HepG2 (cell line): ENCODE measurements at regions of chr6 and their contacts with region 1.

Region 1: GRCh38 chr6:44667668-44668390 is 280.3 kb downstream of the CDC5L start:
- DNase-seq: peak; percentile 39
- ATAC-seq: peak; percentile 86
- H3K4me3 ChIP-seq: no peak overlapping the region
- H3K27ac ChIP-seq: no peak overlapping the region
- H3K4me1 ChIP-seq: peaks cover 10% of the 10 kb centered on the region; the same call in 1 of the 2 replicates
- H3K27me3 ChIP-seq: peaks cover 2 to 22% of the 10 kb centered on the region in 2 experiments; a peak in 3 of 5 replicates
- CTCF ChIP-seq: peak; percentile 72
- EP300 ChIP-seq: no peak
- POLR2A ChIP-seq: no peak
- RAD21 ChIP-seq: 0 out of 2 replicates have a peak, but pooled peaks have one; percentile 17

Region 2: DNA sequence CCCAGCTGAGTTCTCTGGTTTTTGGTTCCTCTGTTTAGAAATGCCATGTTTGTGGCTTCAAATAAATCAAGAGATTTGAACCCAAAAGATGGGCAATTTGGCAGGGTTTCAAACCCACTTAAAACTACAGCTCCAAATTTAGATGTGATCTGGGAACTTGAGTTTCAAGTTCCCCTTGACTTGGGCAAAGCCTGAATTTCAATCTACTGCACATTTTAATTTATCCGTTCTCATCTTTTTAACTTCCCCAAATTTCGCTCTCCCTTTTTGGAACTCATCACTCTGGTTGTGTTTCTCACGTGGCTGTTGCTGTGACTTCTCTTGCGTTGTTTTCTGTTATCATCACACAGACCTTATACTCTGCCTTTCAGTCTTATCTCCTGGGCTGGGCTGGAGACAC is 49.5 kb before region 1 on chr6:
- CTCF ChIA-PET with region 1: no interaction called
- POLR2A ChIA-PET with region 1: no interaction called
- in situ Hi-C with region 1: no loop called
- intact Hi-C with region 1: no loop called
- DNase-seq: no peak
- ATAC-seq: no peak
- H3K4me3 ChIP-seq: no peak overlapping the region
- H3K27ac ChIP-seq: no peak overlapping the region
- H3K4me1 ChIP-seq: no peaks in the 10 kb centered on the region
- H3K27me3 ChIP-seq: peaks cover 0 to 24% of the 10 kb centered on the region in 2 experiments; a peak in 4 of 5 replicates
- CTCF ChIP-seq: no peak
- EP300 ChIP-seq: no peak
- POLR2A ChIP-seq: no peak
- RAD21 ChIP-seq: no peak

Region 3: GRCh38 chr6:45421709-45422502 is 754.1 kb after region 1 on chr6:
- CTCF ChIA-PET with region 1: no interaction called
- POLR2A ChIA-PET with region 1: no interaction called
- in situ Hi-C with region 1: no loop called
- intact Hi-C with region 1: loop called (anchors 2 kb)
- DNase-seq: peak; percentile 16
- ATAC-seq: peak; percentile 83
- H3K4me3 ChIP-seq: peak overlapping the region; percentile 64 to 78 (median 66)
- H3K27ac ChIP-seq: no peak overlapping the region
- H3K4me1 ChIP-seq: peaks cover 24% of the 10 kb centered on the region
- H3K27me3 ChIP-seq: peaks cover 20 to 62% of the 10 kb centered on the region in 2 experiments
- CTCF ChIP-seq: peak; percentile 45
- EP300 ChIP-seq: no peak
- POLR2A ChIP-seq: no peak
- RAD21 ChIP-seq: no peak